GM12878 (cell line): ENCODE measurements at regions of chr12 and their contacts with region 1.

Region 1: DNA sequence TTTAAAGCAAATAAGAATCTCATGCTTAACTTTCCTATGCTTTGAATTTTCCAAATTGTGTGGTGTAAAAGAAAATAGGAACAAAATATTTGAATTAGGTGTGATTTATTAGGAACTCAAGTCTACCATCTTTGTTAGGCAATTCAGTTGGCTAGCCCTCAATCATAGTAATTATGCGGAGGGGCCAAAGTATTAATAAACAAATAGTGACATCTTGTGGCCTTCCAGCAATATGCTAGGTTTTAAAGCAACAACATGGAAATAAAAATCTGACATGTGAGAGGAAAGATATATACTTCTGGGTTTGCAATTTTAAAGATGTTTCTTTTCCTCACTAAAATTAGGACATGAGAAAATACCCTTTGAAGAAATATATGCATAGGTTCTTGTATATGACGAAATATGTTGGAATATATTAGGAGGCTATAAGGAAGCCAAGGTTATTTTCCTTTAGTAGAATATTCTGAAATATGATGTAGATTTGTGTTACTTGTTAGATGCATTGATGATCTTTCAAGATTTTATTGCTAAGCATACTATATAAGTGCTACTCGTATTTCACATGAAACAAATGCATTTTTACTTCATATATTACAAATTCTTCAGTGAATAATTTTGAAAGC is 200.4 kb downstream of the PTPRO start:
- DNase-seq: no peak
- ATAC-seq: peak; percentile 29; the same call in 2 of the 3 replicates
- H3K4me3 ChIP-seq: no peak overlapping the region
- H3K27ac ChIP-seq: no peak overlapping the region
- H3K4me1 ChIP-seq: no peaks in the 10 kb centered on the region
- H3K27me3 ChIP-seq: no peaks in the 10 kb centered on the region
- CTCF ChIP-seq: peak; percentile 38 to 74 (median 52); a peak in 5 of 6 replicates
- EP300 ChIP-seq: no peak
- POLR2A ChIP-seq: no peak
- RAD21 ChIP-seq: peak; percentile 82

Region 2: GRCh38 chr12:15001733-15002382 is 520.8 kb before region 1 on chr12:
- CTCF ChIA-PET with region 1: interaction called, 4 read pairs
- POLR2A ChIA-PET with region 1: no interaction called
- RAD21 ChIA-PET with region 1: no interaction called
- SMC1A ChIA-PET with region 1: no interaction called
- in situ Hi-C with region 1: no loop called
- intact Hi-C with region 1: loop called (anchors 10 kb)
- DNase-seq: no peak
- ATAC-seq: no peak
- H3K4me3 ChIP-seq: no peak overlapping the region
- H3K27ac ChIP-seq: no peak overlapping the region
- H3K4me1 ChIP-seq: no peaks in the 10 kb centered on the region
- H3K27me3 ChIP-seq: peaks cover 0 to 2% of the 10 kb centered on the region in 2 experiments; a peak in 1 of 4 replicates
- CTCF ChIP-seq: no peak
- EP300 ChIP-seq: no peak
- POLR2A ChIP-seq: no peak
- RAD21 ChIP-seq: no peak

Region 3: GRCh38 chr12:15151161-15152120 is 371.2 kb before region 1 on chr12:
- CTCF ChIA-PET with region 1: no interaction called
- POLR2A ChIA-PET with region 1: no interaction called
- RAD21 ChIA-PET with region 1: no interaction called
- SMC1A ChIA-PET with region 1: no interaction called
- in situ Hi-C with region 1: no loop called
- intact Hi-C with region 1: loop called (anchors 1 kb)
- DNase-seq: no peak
- ATAC-seq: peak; percentile 57
- H3K4me3 ChIP-seq: no peak overlapping the region
- H3K27ac ChIP-seq: no peak overlapping the region
- H3K4me1 ChIP-seq: no peaks in the 10 kb centered on the region
- H3K27me3 ChIP-seq: peaks cover 0 to 4% of the 10 kb centered on the region in 2 experiments; a peak in 1 of 4 replicates
- CTCF ChIP-seq: peak in 2 of 3 experiments; percentile 16 to 41; a peak in 2 of 6 replicates
- EP300 ChIP-seq: no peak
- POLR2A ChIP-seq: no peak
- RAD21 ChIP-seq: peak; percentile 14; the same call in 1 of the 2 replicates

Region 4: DNA sequence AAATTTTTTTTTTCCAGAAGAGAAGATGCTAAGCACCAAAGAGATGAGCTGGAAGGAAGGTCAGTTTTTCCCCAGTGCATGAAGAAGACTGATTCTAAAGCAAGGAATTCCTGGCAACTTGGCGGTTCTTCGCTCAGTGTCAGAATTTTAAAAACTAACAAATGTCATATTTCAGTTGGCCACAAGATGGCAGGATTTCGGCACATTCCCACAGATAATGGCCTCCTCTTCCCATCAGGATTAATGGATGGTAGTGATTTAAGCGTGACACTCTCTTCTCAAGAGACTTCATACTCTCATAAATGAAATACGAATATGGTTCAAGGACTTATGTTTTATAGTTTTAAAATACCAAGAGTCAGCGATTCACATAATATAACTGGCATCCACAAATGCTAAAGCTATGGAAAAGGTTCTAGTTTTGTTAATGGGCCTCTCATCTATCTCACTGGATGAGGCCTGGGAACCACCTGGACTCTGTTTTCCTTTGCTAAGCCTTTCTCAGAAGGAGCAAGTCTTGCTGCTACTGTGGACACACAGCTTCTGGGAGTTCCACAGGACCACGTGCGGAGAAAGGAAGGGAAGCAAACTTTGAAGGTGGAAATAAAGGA is 246.5 kb before region 1 on chr12:
- CTCF ChIA-PET with region 1: interaction called, 81 read pairs
- POLR2A ChIA-PET with region 1: interaction called, 8 read pairs
- RAD21 ChIA-PET with region 1: interaction called, 8 read pairs
- SMC1A ChIA-PET with region 1: interaction called, 37 read pairs
- in situ Hi-C with region 1: loop called (anchors 5 kb)
- intact Hi-C with region 1: loop called (anchors 1 kb)
- DNase-seq: no peak
- ATAC-seq: peak; percentile 29
- H3K4me3 ChIP-seq: no peak overlapping the region
- H3K27ac ChIP-seq: no peak overlapping the region
- H3K4me1 ChIP-seq: no peaks in the 10 kb centered on the region
- H3K27me3 ChIP-seq: no peaks in the 10 kb centered on the region
- CTCF ChIP-seq: peak; percentile 52 to 69 (median 57); a peak in 5 of 6 replicates
- EP300 ChIP-seq: no peak
- POLR2A ChIP-seq: no peak
- RAD21 ChIP-seq: peak; percentile 54